ENCODE measurements at regions of chr11 and their contacts with region 1.

Region 1: GRCh38 chr11:10809373-10810160 is 841 bp upstream of the EIF4G2 start:
- DNase-seq: no peak
- H3K4me3 ChIP-seq: peak overlapping the region; percentile 98
- H3K27ac ChIP-seq: peak overlapping the region; percentile 100
- H3K4me1 ChIP-seq: peaks cover 55% of the 10 kb centered on the region
- H3K27me3 ChIP-seq: no peaks in the 10 kb centered on the region
- CTCF ChIP-seq: no peak

Region 2: DNA sequence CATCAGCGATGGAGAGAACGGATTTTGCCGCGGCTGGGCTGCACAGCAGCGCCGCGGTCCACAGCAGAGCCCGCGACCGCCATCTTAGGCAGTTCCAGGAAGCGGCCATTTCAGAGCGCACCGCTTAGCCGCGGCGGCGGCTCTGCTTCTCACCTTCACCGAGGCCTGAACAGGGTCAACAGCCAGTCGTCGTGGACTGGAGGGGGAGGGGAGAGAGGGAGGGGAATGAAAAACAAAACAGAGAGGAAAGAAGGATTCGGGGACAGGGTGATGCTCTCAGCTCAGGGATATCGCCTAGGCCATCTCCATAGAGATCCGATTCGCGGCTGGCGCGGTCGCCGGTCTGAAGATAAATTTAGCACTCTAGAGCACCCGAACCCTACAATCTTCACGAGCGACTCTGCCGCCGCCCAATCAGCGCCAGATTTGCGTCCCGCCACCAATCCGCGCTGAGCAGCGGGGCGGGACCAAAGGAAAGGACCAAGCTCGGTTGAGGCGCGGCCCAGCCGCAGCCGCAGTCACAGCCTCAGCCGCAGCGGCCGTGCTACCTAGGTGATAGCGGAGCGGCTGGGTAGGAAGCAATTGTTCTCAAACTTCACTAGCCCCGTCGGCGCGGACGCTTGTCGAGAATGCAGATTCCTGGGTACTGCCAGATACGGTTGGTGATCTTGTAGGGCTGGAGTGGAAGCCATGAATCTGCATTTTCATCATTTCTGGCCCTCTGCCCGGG is 48.3 kb after region 1 on chr11 and contains the start of gene ZBED5:
- intact Hi-C with region 1: loop called (anchors 5 kb)
- DNase-seq: peak; percentile 97
- H3K4me3 ChIP-seq: peak within 1 kb of the TSS; percentile 90
- H3K27ac ChIP-seq: peak within 1 kb of the TSS; percentile 99
- H3K4me1 ChIP-seq: peaks cover 74% of the 10 kb centered on the region
- H3K27me3 ChIP-seq: no peaks in the 10 kb centered on the region
- CTCF ChIP-seq: no peak
- total RNA-seq, gene ZBED5: 41.6 TPM

Measured in left ventricle myocardium inferior (tissue), 1 donor.